B cell (primary cell): ENCODE measurements at regions of chr15 and their contacts with region 1.

Region 1: GRCh38 chr15:31326156-31326732 is 391 bp upstream of the KLF13 start:
- DNase-seq: peak; percentile 100
- ATAC-seq: peak; percentile 70
- H3K4me3 ChIP-seq: peak overlapping the region; percentile 11 to 89 (median 80)
- H3K4me3 Mint-ChIP-seq: peak overlapping the region; percentile 95
- H3K27ac ChIP-seq: peak overlapping the region; percentile 79 to 97
- H3K27ac Mint-ChIP-seq: peak overlapping the region; percentile 99
- H3K4me1 ChIP-seq: peaks cover 49 to 59% of the 10 kb centered on the region in 2 donors
- H3K4me1 Mint-ChIP-seq: peaks cover 62% of the 10 kb centered on the region
- H3K27me3 ChIP-seq: no peaks in the 10 kb centered on the region
- H3K27me3 Mint-ChIP-seq: no peaks in the 10 kb centered on the region
- CTCF ChIP-seq: no peak

Region 2: GRCh38 chr15:30991255-30992072 is 334.8 kb before region 1 on chr15 and contains the start of gene MTMR10:
- CTCF ChIA-PET with region 1: no interaction called
- POLR2A ChIA-PET with region 1: no interaction called
- intact Hi-C with region 1: loop called (anchors 2 kb)
- DNase-seq: peak; percentile 90
- ATAC-seq: peak; percentile 92
- H3K4me3 ChIP-seq: peak within 1 kb of the TSS; percentile 77 to 96 (median 85)
- H3K4me3 Mint-ChIP-seq: peak within 1 kb of the TSS; percentile 95
- H3K27ac ChIP-seq: peak within 1 kb of the TSS; percentile 81 to 94
- H3K27ac Mint-ChIP-seq: peak within 1 kb of the TSS; percentile 97
- H3K4me1 ChIP-seq: peaks cover 21 to 31% of the 10 kb centered on the region in 2 donors
- H3K4me1 Mint-ChIP-seq: peaks cover 31% of the 10 kb centered on the region
- H3K27me3 ChIP-seq: no peaks in the 10 kb centered on the region
- H3K27me3 Mint-ChIP-seq: no peaks in the 10 kb centered on the region
- CTCF ChIP-seq: no peak
- total RNA-seq, gene MTMR10: 50.2 and 53.2 TPM in 2 replicates

Region 3: DNA sequence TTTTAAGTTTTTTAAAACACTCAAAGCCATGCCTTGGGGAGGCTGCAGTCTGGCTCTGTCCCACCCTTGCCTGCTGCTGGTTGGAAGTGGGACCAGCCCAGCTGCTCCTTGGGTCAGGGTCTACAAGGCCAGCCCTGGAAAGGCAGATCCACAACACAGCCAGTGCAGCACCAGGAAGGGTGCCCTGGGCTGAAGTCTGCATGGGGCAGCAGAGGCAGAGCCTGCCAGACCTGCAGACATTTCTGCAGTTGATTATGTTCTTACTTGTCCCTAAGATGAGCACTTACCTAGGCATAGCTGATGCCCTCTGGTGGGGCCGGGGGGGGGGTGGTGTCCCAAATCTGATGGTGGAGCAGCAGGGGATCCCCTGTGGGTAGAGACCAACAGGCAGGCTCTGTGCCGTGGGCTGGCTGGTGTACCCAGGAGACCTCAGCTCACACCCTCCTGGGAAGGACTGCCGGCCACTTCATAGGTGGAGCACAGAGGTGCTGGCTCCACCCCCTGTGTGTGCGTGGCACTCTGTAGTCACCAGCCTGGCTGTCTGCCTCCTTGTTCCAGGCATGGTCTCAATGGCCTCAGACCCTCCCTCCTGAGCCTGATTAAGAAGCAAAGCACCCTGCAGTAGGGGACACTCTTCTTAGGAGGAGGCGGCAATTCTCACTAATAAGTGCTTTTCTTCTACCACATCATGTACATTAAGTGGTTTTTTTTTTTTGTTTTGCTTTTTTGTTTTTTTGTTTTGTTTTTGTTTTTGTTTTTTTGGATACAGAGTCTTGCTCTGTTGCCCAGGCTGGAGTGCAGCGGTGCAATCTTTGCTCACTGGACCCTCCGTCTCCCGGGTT is 97.0 kb before region 1 on chr15:
- CTCF ChIA-PET with region 1: interaction called, 34 read pairs
- POLR2A ChIA-PET with region 1: interaction called, 14 read pairs
- intact Hi-C with region 1: loop called (anchors 1 kb)
- DNase-seq: peak; percentile 68
- ATAC-seq: peak; percentile 46
- H3K4me3 ChIP-seq: peak overlapping the region; percentile 19 to 63 (median 43)
- H3K4me3 Mint-ChIP-seq: peak overlapping the region; percentile 89
- H3K27ac ChIP-seq: peak overlapping the region; percentile 11 to 68
- H3K27ac Mint-ChIP-seq: peak overlapping the region; percentile 92
- H3K4me1 ChIP-seq: peaks cover 72 to 86% of the 10 kb centered on the region in 2 donors
- H3K4me1 Mint-ChIP-seq: peaks cover 86% of the 10 kb centered on the region
- H3K27me3 ChIP-seq: no peaks in the 10 kb centered on the region
- H3K27me3 Mint-ChIP-seq: no peaks in the 10 kb centered on the region
- CTCF ChIP-seq: no peak

Region 4: DNA sequence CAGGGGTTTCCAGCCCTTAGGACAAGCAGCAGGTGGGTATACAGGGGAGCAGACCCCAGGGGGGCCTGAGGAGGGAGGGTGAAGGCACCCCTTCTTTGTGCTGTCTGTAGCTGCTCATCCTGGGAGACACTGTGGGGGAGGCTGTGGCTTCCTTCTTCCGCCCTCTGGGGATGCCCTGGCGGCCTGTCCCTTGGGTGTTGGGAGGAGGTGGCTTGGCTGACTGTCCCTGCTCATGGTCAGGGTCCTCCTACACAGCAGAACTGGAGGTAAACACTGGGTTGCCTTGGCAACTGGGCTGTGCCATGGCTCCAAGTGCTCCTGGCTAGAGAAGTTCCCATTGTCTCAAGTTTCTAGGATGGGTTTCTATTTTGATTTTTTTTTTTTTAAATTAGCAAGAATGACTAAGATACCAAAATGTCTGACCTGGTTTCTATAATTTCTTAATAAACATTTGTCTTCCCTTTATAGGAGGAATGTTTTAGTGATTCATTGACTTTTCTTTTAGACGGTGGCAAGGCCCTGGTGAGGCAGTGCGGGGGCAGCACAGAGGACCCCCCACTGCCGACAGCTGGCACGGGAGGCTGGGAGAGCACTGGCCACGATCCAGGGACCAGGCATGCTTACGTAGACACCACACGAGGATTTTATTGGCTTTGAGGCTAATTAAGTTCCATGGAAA is 12.8 kb after region 1 on chr15:
- CTCF ChIA-PET with region 1: interaction called, 5 read pairs
- POLR2A ChIA-PET with region 1: interaction called, 19 read pairs
- intact Hi-C with region 1: loop called (anchors 1 kb)
- DNase-seq: no peak
- ATAC-seq: peak; percentile 31
- H3K4me3 ChIP-seq: no peak overlapping the region
- H3K4me3 Mint-ChIP-seq: peak overlapping the region; percentile 81
- H3K27ac ChIP-seq: peak overlapping the region; percentile 63 to 80
- H3K27ac Mint-ChIP-seq: peak overlapping the region; percentile 84
- H3K4me1 ChIP-seq: peaks cover 96 to 100% of the 10 kb centered on the region in 2 donors
- H3K4me1 Mint-ChIP-seq: peaks cover 96% of the 10 kb centered on the region
- H3K27me3 ChIP-seq: no peaks in the 10 kb centered on the region
- H3K27me3 Mint-ChIP-seq: no peaks in the 10 kb centered on the region
- CTCF ChIP-seq: no peak

Region 5: DNA sequence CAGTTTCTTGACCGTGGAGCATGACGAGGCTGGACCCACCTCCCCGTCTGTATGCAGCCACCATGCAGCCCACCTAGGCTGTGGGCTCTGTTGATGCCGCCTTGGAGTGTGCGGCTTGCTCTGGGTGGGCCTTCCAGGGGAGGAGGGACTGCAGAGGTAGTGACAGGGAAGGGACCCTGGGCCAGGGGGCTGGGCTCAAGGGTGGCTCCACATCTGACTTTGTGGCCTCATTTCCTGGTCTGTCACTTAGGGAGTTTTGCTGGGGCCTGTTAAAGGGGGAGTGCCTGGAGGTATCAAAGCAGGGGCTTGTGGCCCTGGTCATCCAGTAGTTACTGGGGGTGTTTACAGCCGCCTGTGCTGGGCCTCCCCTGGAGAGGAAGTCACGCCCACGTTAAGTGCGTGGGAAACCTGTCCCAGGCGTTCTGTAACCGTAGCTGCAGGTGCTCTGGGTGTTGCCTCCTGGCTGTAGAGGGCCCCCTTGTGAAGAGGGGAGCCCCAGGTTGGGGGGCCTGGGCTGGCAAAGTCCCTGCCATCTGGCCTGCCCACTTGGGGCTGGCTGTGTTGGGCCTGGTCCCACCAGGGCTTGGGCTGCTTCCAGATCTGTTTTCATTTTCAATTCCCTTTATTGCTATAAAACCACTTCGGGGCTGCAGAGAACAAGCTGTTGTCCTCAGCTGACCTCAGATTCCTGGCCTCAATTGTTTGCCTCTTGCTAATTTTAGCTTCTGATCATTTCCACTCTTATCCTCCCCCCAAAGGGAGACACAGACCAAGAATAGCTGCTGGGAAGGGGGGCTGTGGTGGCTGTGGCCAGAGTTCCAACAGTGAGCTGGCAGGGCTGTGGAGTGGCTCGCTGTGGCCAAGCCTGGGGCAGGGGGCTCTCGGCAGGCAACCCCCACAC is 26.9 kb after region 1 on chr15:
- CTCF ChIA-PET with region 1: interaction called, 9 read pairs
- POLR2A ChIA-PET with region 1: interaction called, 11 read pairs
- intact Hi-C with region 1: loop called (anchors 1 kb)
- DNase-seq: peak; percentile 87
- ATAC-seq: peak; percentile 82
- H3K4me3 ChIP-seq: peak overlapping the region in 4 of 5 experiments; percentile 10 to 58 (median 34)
- H3K4me3 Mint-ChIP-seq: peak overlapping the region; percentile 88
- H3K27ac ChIP-seq: peak overlapping the region; percentile 96 to 97
- H3K27ac Mint-ChIP-seq: peak overlapping the region; percentile 96
- H3K4me1 ChIP-seq: peaks cover 99 to 100% of the 10 kb centered on the region in 2 donors
- H3K4me1 Mint-ChIP-seq: peaks cover 97% of the 10 kb centered on the region
- H3K27me3 ChIP-seq: no peaks in the 10 kb centered on the region
- H3K27me3 Mint-ChIP-seq: no peaks in the 10 kb centered on the region
- CTCF ChIP-seq: no peak

Region 6: DNA sequence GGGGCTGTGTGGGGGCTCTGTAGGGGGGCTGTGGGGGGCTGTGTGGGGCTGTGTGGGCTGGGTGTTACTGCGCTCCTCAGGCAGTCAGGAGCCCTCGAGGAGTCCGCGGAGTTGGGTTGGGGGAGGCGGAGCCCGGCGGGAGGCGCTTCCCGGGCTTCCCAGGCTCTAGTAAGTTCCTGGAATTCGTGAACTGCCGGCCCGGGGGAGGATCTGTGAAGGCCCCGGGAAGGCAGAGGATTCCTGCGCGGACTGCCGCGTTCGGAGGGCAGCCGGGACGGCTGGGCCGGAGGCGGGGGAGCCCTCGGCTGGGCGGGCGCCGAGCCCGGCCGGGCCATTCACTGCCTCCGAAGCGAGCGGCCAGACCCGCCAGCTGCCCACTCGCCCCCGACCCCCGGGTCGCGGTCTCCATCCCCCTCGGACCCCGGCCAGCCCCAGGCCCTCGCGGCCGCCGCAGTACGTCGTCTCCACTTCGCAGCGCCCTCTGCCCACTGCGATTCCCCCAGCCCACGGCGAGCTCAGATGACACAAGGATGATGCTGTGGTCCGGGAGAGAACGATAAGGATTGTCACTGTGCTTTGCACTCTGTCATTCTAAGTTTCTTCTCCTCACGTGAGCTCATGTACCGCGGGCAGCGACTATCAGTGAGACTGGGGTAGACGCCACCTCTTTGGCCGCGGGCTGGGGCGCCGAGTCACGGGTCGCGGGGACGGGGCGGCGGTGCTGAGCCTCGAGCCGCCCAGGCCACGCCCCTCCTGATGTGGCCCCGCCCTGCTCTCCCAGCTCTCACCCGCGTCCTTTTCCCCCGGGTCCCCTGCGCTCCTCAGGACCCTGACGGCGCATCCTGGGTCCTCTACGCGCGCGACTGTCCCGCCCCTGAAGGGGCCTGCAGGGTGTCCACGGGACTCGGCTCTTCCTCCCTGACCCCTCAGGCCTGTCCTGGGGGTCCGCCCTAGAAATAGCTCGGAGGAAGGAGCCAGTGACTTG is 65.7 kb after region 1 on chr15:
- CTCF ChIA-PET with region 1: no interaction called
- POLR2A ChIA-PET with region 1: interaction called, 13 read pairs
- intact Hi-C with region 1: loop called (anchors 2 kb)
- DNase-seq: peak; percentile 86
- ATAC-seq: peak; percentile 92
- H3K4me3 ChIP-seq: peak overlapping the region; percentile 22 to 90 (median 82)
- H3K4me3 Mint-ChIP-seq: peak overlapping the region; percentile 94
- H3K27ac ChIP-seq: peak overlapping the region; percentile 48 to 52
- H3K27ac Mint-ChIP-seq: peak overlapping the region; percentile 89
- H3K4me1 ChIP-seq: peaks cover 3 to 13% of the 10 kb centered on the region in 2 donors
- H3K4me1 Mint-ChIP-seq: peaks cover 17% of the 10 kb centered on the region
- H3K27me3 ChIP-seq: no peaks in the 10 kb centered on the region
- H3K27me3 Mint-ChIP-seq: no peaks in the 10 kb centered on the region
- CTCF ChIP-seq: no peak